ENCODE measurements at regions of chr1 and their contacts with region 1.

Region 1: GRCh38 chr1:221435504-221435904 is 306.4 kb downstream of the DUSP10 start:
- DNase-seq: no peak
- ATAC-seq: peak; percentile 37 to 82 (median 70)
- H3K4me3 ChIP-seq: no peak overlapping the region
- H3K27ac ChIP-seq: no peak overlapping the region
- H3K4me1 ChIP-seq: peaks cover 0 to 26% (median 6%) of the 10 kb centered on the region in 12 donors
- H3K27me3 ChIP-seq: no peaks in the 10 kb centered on the region
- CTCF ChIP-seq: peak; percentile 90 to 97 (median 96)
- POLR2A ChIP-seq: no peak

Region 2: DNA sequence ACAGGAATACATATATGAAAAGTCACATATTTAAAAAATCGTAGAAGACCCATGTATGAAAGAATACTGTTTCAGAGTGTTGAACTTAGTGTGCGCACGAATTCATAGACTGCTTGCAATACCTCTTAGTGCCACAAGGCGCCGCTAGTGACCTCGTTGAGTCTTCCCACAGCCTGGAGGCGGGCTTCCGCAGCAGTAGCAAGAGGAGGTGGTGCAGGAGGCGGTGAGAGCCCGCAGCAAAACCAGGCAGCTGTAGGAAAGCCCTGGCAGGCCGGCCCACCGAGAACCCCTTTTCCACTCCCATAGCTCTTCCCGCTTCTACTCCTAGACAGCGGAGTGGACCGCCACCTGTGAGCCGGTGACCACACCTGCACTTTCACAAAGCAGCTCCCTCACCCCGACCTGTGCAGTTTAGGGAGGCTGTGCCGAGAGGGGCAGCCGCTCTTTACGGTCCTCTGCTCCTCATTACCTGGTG is 625.3 kb before region 1 on chr1:
- intact Hi-C with region 1: loop called (anchors 1 to 10 kb)
- DNase-seq: peak; percentile 77 to 88 (median 84)
- ATAC-seq: peak; percentile 62 to 91 (median 80)
- H3K4me3 ChIP-seq: peak overlapping the region in 10 of 12 donors; percentile 7 to 46 (median 30)
- H3K27ac ChIP-seq: no peak overlapping the region
- H3K4me1 ChIP-seq: peaks cover 0 to 21% (median 7%) of the 10 kb centered on the region in 12 donors
- H3K27me3 ChIP-seq: no peaks in the 10 kb centered on the region
- CTCF ChIP-seq: peak; percentile 88 to 97 (median 94)
- POLR2A ChIP-seq: no peak

Region 3: GRCh38 chr1:220873868-220874655 is 561.4 kb before region 1 on chr1:
- intact Hi-C with region 1: loop called (anchors 1 to 5 kb)
- DNase-seq: peak in 3 of 5 donors; percentile 63 to 72 (median 66)
- ATAC-seq: peak in 3 of 4 donors; percentile 27 to 43 (median 37)
- H3K4me3 ChIP-seq: no peak overlapping the region
- H3K27ac ChIP-seq: peak overlapping the region in 4 of 12 donors; percentile 13 to 97 (median 42)
- H3K4me1 ChIP-seq: peaks cover 0 to 47% (median 29%) of the 10 kb centered on the region in 12 donors
- H3K27me3 ChIP-seq: peaks cover 0 to 7% (median 0%) of the 10 kb centered on the region in 9 donors
- CTCF ChIP-seq: peak; percentile 53 to 87 (median 76)
- POLR2A ChIP-seq: no peak

Region 4: GRCh38 chr1:220908757-220909156 is 526.7 kb before region 1 on chr1:
- intact Hi-C with region 1: loop called in 5 of 10 experiments (anchors 10 kb)
- DNase-seq: no peak
- ATAC-seq: peak in 1 of 4 donors; percentile 45
- H3K4me3 ChIP-seq: no peak overlapping the region
- H3K27ac ChIP-seq: no peak overlapping the region
- H3K4me1 ChIP-seq: peaks cover 0 to 8% (median 0%) of the 10 kb centered on the region in 12 donors
- H3K27me3 ChIP-seq: no peaks in the 10 kb centered on the region
- CTCF ChIP-seq: peak; percentile 19 to 72 (median 61)
- POLR2A ChIP-seq: no peak

Region 5: GRCh38 chr1:221013691-221014660 is 421.5 kb before region 1 on chr1:
- intact Hi-C with region 1: no loop called
- DNase-seq: no peak
- ATAC-seq: no peak
- H3K4me3 ChIP-seq: no peak overlapping the region
- H3K27ac ChIP-seq: no peak overlapping the region
- H3K4me1 ChIP-seq: peaks cover 0 to 33% (median 5%) of the 10 kb centered on the region in 12 donors
- H3K27me3 ChIP-seq: no peaks in the 10 kb centered on the region
- CTCF ChIP-seq: no peak
- POLR2A ChIP-seq: no peak

Region 6: DNA sequence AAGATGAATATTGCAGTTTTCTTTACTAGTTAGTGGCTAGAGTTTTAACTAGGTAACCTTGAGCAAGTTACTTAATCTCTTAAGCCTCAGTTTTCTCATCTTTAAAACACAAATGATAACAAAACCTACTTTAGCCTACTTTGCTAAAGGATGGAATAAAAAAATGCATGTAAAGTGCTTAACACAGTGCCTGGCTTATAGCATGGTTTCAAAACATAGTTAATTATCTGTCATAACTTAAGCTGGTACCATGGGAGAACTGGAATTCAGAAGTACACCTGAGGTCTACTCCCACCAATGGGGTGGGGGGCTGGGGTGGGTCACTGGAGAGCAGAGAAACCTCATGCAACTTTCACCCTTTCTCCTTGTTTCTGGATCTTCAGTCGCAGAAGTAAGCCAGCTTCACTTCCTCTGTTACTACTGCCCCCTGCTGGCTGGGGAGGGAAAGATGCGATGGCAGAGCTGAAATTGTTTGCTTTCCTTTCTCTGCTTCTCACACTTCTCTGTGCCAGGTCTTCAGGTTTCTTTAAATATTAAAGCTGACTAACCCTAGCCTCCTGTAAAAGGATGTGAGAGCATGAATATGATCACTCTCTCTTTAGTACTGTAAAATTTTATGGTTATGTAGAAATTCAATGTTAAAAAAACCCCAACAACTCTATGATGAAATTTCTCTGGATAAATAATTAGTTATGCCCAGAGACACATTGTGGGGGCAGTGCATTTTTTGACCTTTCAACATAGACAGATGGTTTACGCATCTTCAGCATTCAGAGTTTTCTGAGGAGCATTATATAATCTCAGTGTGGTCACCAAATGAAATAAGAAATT is 232.1 kb before region 1 on chr1:
- intact Hi-C with region 1: loop called in 8 of 10 experiments (anchors 5 to 10 kb)
- DNase-seq: peak; percentile 76 to 86 (median 80)
- ATAC-seq: peak; percentile 44 to 76 (median 71)
- H3K4me3 ChIP-seq: peak overlapping the region in 1 of 12 donors; percentile 1
- H3K27ac ChIP-seq: peak overlapping the region; percentile 2 to 68 (median 39)
- H3K4me1 ChIP-seq: peaks cover 0 to 27% (median 18%) of the 10 kb centered on the region in 12 donors
- H3K27me3 ChIP-seq: no peaks in the 10 kb centered on the region
- CTCF ChIP-seq: peak; percentile 80 to 96 (median 91)
- POLR2A ChIP-seq: no peak

Region 7: GRCh38 chr1:221263831-221264767 is 171.4 kb before region 1 on chr1:
- intact Hi-C with region 1: loop called (anchors 1 to 5 kb)
- DNase-seq: peak in 4 of 5 donors; percentile 35 to 63 (median 52)
- ATAC-seq: peak; percentile 59 to 86 (median 75)
- H3K4me3 ChIP-seq: peak overlapping the region in 1 of 12 donors; percentile 2
- H3K27ac ChIP-seq: peak overlapping the region in 11 of 12 donors; percentile 7 to 73 (median 41)
- H3K4me1 ChIP-seq: peaks cover 0 to 19% (median 11%) of the 10 kb centered on the region in 12 donors
- H3K27me3 ChIP-seq: no peaks in the 10 kb centered on the region
- CTCF ChIP-seq: peak; percentile 39 to 70 (median 54)
- POLR2A ChIP-seq: no peak

Region 8: GRCh38 chr1:221637641-221638041 is 202.1 kb after region 1 on chr1:
- intact Hi-C with region 1: no loop called
- DNase-seq: peak in 3 of 5 donors; percentile 11 to 49 (median 29)
- ATAC-seq: peak in 3 of 4 donors; percentile 63 to 72 (median 68)
- H3K4me3 ChIP-seq: no peak overlapping the region
- H3K27ac ChIP-seq: no peak overlapping the region
- H3K4me1 ChIP-seq: peaks cover 0 to 14% (median 0%) of the 10 kb centered on the region in 12 donors
- H3K27me3 ChIP-seq: peaks cover 0 to 5% (median 0%) of the 10 kb centered on the region in 9 donors
- CTCF ChIP-seq: peak in 3 of 12 donors; percentile 19 to 31 (median 23)
- POLR2A ChIP-seq: no peak